Spleen (tissue), 13 donors: ENCODE measurements at regions of chr4 and their contacts with region 1.

Region 1: DNA sequence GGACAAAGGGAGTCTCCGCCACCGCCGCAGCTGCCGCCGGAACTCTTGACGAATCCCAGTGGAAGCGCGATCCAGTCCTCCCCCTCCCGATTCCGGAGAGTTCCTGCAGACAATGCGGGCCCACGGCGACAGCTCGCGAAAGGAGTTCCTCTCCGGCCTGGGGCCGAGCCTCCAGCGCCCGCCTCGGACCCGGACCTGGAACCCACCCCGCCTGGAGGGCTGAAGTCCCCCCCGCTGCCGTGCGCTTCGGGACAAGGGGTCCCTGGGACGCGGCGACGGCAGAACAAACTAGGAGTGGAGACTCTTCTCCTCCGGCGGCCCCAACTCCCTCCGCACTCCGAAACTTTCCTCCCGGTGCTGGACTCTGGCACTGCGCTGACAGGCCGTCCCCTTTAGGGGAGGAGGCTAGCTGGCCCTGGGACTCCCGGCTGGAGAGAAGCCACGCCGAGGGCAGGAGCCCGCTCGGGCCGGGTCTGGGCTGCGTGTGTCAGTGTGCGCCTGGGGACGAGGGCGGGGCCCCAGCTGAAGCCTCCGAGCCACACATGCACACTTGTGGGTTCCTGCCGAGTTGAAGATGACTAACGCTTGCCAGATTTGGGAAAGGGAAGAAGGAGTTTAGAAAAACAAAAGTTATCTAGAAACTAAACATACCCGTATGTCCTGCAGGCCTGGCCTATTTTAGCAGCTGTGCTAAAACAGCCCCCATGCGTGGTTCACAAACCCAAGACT is at the start of gene ANTXR2:
- DNase-seq: peak; percentile 95
- H3K4me3 ChIP-seq: peak within 1 kb of the TSS; percentile 67 to 96 (median 84)
- H3K27ac ChIP-seq: peak within 1 kb of the TSS; percentile 87 to 98 (median 94)
- H3K4me1 ChIP-seq: peaks cover 18 to 89% (median 41%) of the 10 kb centered on the region in 6 donors
- H3K27me3 ChIP-seq: peaks cover 0 to 5% (median 0%) of the 10 kb centered on the region in 7 donors
- CTCF ChIP-seq: peak in 1 of 11 experiments; percentile 8
- POLR2A ChIP-seq: peak in 1 of 3 donors; percentile 6
- total RNA-seq, gene ANTXR2: 30.9 to 56.3 (median 43.3) TPM

Region 2: DNA sequence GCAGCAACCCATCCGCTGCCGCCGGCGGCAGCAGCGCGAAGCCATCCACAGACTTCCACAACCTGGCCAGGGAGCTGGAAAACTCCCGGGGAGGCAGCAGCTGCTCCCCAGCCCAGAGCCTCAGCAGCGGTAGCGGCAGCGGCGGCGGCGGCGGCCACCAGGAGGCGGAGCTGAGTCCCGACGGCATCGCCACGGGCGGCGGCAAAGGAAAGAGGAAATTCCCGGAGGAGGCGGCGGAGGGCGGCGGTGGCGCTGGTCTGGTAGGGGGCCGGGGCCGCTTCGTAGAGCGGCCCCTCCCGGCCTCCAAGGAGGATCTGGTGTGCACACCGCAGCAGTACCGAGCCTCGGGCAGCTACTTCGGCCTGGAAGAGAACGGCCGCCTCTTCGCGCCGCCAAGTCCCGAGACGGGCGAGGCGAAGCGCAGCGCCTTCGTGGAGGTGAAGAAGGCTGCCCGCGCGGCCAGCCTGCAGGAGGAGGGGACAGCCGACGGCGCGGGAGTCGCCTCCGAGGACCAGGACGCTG is 129.3 kb after region 1 on chr4:
- intact Hi-C with region 1: loop called (anchors 5 kb)
- DNase-seq: peak; percentile 97
- H3K4me3 ChIP-seq: peak overlapping the region; percentile 57 to 91 (median 74)
- H3K27ac ChIP-seq: peak overlapping the region; percentile 27 to 88 (median 70)
- H3K4me1 ChIP-seq: peaks cover 0 to 43% (median 35%) of the 10 kb centered on the region in 6 donors
- H3K27me3 ChIP-seq: peaks cover 0 to 74% (median 53%) of the 10 kb centered on the region in 7 donors
- CTCF ChIP-seq: peak; percentile 61 to 94 (median 86)
- POLR2A ChIP-seq: no peak